A673 (cell line): ENCODE measurements at regions of chr10 and their contacts with region 1.

Region 1: DNA sequence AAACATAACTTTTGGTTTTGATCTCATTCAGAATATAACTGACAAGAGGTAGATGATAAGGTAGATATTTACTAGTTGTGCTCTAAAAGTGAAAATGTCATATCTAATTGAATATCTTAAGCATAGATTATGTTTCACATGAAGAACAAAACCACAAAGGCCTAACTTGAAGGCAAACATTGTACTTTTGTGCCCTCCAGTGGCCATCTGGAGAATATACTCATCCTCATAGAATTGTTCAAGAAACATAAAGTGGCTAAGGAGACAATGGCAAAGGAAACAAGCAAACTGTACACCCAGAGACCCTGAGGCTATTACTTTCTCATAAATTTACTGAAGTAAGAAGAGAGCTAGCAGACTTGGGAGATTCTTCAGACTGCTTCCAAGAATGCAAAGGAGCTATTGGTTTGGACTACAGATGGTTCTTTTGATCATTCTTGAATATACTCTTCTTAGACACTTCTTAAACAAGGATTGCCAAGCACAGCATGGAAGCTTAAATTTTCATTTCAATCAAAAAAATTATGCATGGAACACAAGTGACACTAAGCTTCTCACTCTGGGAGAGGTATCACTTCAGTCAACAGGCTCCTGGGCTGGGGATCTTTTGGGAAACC is 98.2 kb upstream of the DKK1 start:
- DNase-seq: peak; percentile 77
- H3K4me3 ChIP-seq: no peak overlapping the region
- H3K27ac ChIP-seq: no peak overlapping the region
- H3K4me1 ChIP-seq: peaks cover 18% of the 10 kb centered on the region
- H3K27me3 ChIP-seq: no peaks in the 10 kb centered on the region
- CTCF ChIP-seq: peak; percentile 81

Region 2: GRCh38 chr10:51010977-51011376 is 1204.9 kb before region 1 on chr10:
- CTCF ChIA-PET with region 1: no interaction called
- POLR2A ChIA-PET with region 1: no interaction called
- intact Hi-C with region 1: loop called (anchors 2 kb)
- DNase-seq: peak; percentile 62
- H3K4me3 ChIP-seq: no peak overlapping the region
- H3K27ac ChIP-seq: no peak overlapping the region
- H3K4me1 ChIP-seq: no peaks in the 10 kb centered on the region
- H3K27me3 ChIP-seq: peaks cover 9% of the 10 kb centered on the region
- CTCF ChIP-seq: peak; percentile 81

Region 3: GRCh38 chr10:52668024-52668423 is 452.2 kb after region 1 on chr10:
- CTCF ChIA-PET with region 1: no interaction called
- POLR2A ChIA-PET with region 1: no interaction called
- intact Hi-C with region 1: no loop called
- DNase-seq: peak; percentile 81
- H3K4me3 ChIP-seq: no peak overlapping the region
- H3K27ac ChIP-seq: no peak overlapping the region
- H3K4me1 ChIP-seq: no peaks in the 10 kb centered on the region
- H3K27me3 ChIP-seq: no peaks in the 10 kb centered on the region
- CTCF ChIP-seq: no peak